Activated CD4-positive, alpha-beta T cell treated with anti-CD3 and anti-CD28 coated beads for 36 hours (primary cell): ENCODE measurements at regions of chr3 and their contacts with region 1.

Region 1: DNA sequence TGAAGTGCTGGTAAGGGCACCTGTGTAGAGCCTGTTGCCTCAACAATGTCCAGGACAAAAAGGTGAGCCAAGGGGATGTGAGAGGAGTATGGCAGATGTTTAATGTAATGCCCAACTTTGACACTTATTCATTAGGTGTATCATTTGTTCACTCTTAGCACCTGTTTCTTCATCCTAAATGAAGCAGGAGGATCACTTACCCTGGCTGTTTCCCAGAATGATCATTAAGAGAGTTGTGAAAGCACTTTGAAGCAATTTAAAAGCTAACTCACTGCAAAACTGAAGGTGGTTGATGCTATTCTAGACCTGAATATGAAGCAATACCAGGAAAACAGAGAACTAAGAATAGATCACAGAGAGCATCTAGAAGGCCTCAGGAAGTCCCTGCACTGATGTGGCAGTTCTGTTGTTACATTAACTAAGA is 3.4 kb upstream of the HHLA2 start:
- DNase-seq: peak; percentile 39
- ATAC-seq: peak; percentile 74
- H3K4me3 Mint-ChIP-seq: no peak overlapping the region
- H3K27ac Mint-ChIP-seq: peak overlapping the region; percentile 56
- H3K4me1 Mint-ChIP-seq: peaks cover 55% of the 10 kb centered on the region
- H3K27me3 Mint-ChIP-seq: no peaks in the 10 kb centered on the region

Region 2: GRCh38 chr3:108124337-108125152 is 168.4 kb before region 1 on chr3:
- CTCF ChIA-PET with region 1: no interaction called
- POLR2A ChIA-PET with region 1: interaction called, 4 read pairs
- intact Hi-C with region 1: loop called in 1 of 2 experiments (anchors 2 kb)
- DNase-seq: peak; percentile 82
- ATAC-seq: peak; percentile 70
- H3K4me3 Mint-ChIP-seq: peak overlapping the region; percentile 93
- H3K27ac Mint-ChIP-seq: peak overlapping the region; percentile 96
- H3K4me1 Mint-ChIP-seq: peaks cover 62% of the 10 kb centered on the region
- H3K27me3 Mint-ChIP-seq: no peaks in the 10 kb centered on the region

Region 3: DNA sequence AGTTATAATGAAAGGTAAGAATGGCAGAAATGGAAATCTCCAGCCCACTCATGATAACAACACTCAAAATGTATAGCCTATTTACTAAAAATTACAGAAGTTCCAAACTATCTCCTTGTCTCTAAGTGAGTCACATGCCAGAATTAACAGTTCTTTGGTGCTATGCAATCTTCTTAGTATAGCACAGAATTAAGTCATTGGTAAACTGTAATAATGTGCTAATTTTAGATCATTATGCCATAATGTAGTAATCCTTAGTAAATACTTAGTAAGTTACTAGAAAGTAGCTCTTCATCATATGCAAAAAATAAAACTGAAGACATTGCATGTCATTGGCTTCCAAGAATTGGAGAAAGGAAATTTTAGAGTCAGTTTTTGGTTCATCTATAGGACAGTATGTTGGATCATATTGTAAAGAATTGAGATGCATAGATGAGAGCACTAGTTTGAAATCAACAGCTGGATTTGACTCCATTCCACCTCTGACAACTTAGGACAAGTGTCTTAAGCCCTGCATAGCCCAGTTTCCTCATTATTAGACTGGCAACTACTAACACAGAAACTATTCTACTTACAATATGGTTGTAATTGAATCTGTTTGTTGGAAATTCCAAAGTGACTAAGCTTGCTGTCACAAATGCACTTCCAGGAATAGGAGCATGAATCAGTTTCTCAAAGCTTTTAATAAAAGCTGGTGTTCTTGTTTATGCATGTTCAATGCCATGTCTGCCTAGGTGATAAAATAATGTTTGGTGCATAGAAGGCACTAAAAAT is 162.0 kb before region 1 on chr3:
- CTCF ChIA-PET with region 1: no interaction called
- POLR2A ChIA-PET with region 1: interaction called, 4 read pairs
- intact Hi-C with region 1: loop called in 1 of 2 experiments (anchors 5 kb)
- DNase-seq: no peak
- ATAC-seq: peak; percentile 37
- H3K4me3 Mint-ChIP-seq: peak overlapping the region; percentile 48
- H3K27ac Mint-ChIP-seq: peak overlapping the region; percentile 93
- H3K4me1 Mint-ChIP-seq: peaks cover 86% of the 10 kb centered on the region
- H3K27me3 Mint-ChIP-seq: no peaks in the 10 kb centered on the region

Region 4: DNA sequence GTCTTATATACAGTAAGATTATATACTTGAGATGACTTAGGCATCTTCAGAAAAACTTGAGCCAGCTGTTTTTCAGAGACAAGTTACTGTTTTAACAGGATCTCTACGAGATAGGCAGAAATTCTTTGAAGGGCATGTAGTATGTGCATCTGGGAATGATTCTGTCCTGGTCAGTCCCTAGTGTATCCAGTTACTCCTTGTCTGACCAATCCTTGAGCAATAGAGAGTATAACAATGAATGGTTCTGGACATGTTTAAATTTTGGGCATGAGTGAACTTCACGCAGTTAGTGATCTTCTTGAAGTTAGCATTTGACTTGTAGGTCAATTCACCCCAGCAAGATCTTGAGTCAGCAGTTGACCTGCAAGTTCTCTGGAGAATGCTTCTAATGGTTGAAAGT is 21.3 kb before region 1 on chr3:
- CTCF ChIA-PET with region 1: no interaction called
- POLR2A ChIA-PET with region 1: interaction called, 10 read pairs
- intact Hi-C with region 1: no loop called
- DNase-seq: no peak
- ATAC-seq: no peak
- H3K4me3 Mint-ChIP-seq: no peak overlapping the region
- H3K27ac Mint-ChIP-seq: no peak overlapping the region
- H3K4me1 Mint-ChIP-seq: no peaks in the 10 kb centered on the region
- H3K27me3 Mint-ChIP-seq: no peaks in the 10 kb centered on the region

Region 5: GRCh38 chr3:108342837-108343478 is 50.0 kb after region 1 on chr3:
- CTCF ChIA-PET with region 1: no interaction called
- POLR2A ChIA-PET with region 1: no interaction called
- intact Hi-C with region 1: loop called in 1 of 2 experiments (anchors 2 kb)
- DNase-seq: no peak
- ATAC-seq: peak; percentile 92
- H3K4me3 Mint-ChIP-seq: no peak overlapping the region
- H3K27ac Mint-ChIP-seq: peak overlapping the region; percentile 5
- H3K4me1 Mint-ChIP-seq: peaks cover 17% of the 10 kb centered on the region
- H3K27me3 Mint-ChIP-seq: peaks cover 5% of the 10 kb centered on the region

Region 6: GRCh38 chr3:108388136-108389132 is 95.5 kb after region 1 on chr3:
- CTCF ChIA-PET with region 1: interaction called, 5 read pairs
- POLR2A ChIA-PET with region 1: no interaction called
- intact Hi-C with region 1: loop called in 1 of 2 experiments (anchors 1 kb)
- DNase-seq: peak; percentile 29
- ATAC-seq: peak; percentile 90
- H3K4me3 Mint-ChIP-seq: no peak overlapping the region
- H3K27ac Mint-ChIP-seq: peak overlapping the region; percentile 8
- H3K4me1 Mint-ChIP-seq: peaks cover 25% of the 10 kb centered on the region
- H3K27me3 Mint-ChIP-seq: peaks cover 15% of the 10 kb centered on the region